HepG2 (cell line): ENCODE measurements at regions of chr22 and their contacts with region 1.

Region 1: GRCh38 chr22:31399211-31400028 is at the start of gene DRG1:
- DNase-seq: peak; percentile 90
- ATAC-seq: peak; percentile 94
- H3K4me3 ChIP-seq: peak within 1 kb of the TSS; percentile 84 to 100 (median 95)
- H3K27ac ChIP-seq: peak within 1 kb of the TSS; percentile 80
- H3K4me1 ChIP-seq: peaks cover 39% of the 10 kb centered on the region
- H3K27me3 ChIP-seq: no peaks in the 10 kb centered on the region; a peak in 1 of 5 replicates
- CTCF ChIP-seq: peak; percentile 32
- EP300 ChIP-seq: peak in 1 of 2 experiments; percentile 55; a peak in 2 of 4 replicates
- POLR2A ChIP-seq: peak; percentile 95 to 99
- RAD21 ChIP-seq: peak; percentile 57
- total RNA-seq, gene DRG1: 94.8 and 98.8 TPM in 2 replicates

Region 2: DNA sequence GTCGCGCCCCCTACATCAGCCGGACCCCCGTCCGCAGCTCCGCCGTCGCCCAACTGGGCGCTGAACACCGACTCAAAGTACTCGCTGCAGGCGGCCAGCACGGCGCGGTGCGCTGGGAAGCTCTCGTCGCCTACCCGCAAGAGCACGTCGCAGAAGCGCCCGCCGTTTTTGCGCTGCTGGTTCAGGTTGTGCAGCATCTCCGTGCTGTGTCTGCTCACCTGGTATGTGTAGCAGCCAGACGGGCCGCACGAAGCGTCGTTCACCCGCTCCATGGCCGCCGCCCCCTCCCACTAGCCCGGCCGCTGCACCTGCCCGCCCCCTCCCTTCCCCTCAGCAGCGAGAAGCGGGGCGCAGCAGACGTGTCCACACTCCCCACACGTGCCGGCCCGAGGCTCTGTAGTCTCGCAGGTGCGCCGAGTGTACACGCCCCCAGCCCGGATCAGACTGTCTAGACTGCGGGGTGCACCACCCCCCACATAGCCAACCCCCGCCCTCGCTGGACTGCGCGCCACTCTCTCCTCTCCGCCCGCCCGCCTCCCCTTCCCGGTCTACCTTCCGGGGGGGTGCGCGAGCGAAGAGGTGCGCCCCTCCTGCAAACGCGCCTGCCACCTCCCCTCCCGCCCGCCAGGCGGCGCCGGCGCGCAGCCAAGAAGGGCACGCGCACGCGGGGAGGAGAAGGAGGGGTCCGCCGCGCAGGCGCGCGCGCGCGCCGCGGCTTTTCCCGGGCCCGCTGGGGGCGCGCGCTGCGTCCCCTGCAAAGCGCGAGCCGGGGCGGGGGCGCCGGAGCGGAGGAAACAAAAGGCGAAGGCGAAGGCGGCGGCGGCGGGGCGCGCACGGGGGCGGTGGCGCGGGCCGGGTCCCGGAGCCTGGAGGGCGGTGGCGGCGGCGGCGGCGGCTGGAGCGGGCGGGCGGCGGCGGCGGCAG is 53.8 kb before region 1 on chr22:
- CTCF ChIA-PET with region 1: no interaction called
- POLR2A ChIA-PET with region 1: interaction called, 98 read pairs
- in situ Hi-C with region 1: loop called (anchors 5 kb)
- intact Hi-C with region 1: loop called (anchors 1 kb)
- DNase-seq: peak; percentile 70
- ATAC-seq: peak; percentile 3
- H3K4me3 ChIP-seq: peak overlapping the region; percentile 64 to 91 (median 85); a peak in 5 of 6 replicates
- H3K27ac ChIP-seq: peak overlapping the region; percentile 94
- H3K4me1 ChIP-seq: peaks cover 74% of the 10 kb centered on the region
- H3K27me3 ChIP-seq: no peaks in the 10 kb centered on the region; a peak in 1 of 5 replicates
- CTCF ChIP-seq: peak; percentile 89
- EP300 ChIP-seq: no peak
- POLR2A ChIP-seq: no peak
- RAD21 ChIP-seq: peak; percentile 91